Activated CD4-positive, alpha-beta T cell treated with anti-CD3 and anti-CD28 coated beads, Interleukin-2, amount 10 ng/mL, durations not matched to agents 7 days and 5 days (primary cell): ENCODE measurements at regions of chr10 and their contacts with region 1.

Region 1: DNA sequence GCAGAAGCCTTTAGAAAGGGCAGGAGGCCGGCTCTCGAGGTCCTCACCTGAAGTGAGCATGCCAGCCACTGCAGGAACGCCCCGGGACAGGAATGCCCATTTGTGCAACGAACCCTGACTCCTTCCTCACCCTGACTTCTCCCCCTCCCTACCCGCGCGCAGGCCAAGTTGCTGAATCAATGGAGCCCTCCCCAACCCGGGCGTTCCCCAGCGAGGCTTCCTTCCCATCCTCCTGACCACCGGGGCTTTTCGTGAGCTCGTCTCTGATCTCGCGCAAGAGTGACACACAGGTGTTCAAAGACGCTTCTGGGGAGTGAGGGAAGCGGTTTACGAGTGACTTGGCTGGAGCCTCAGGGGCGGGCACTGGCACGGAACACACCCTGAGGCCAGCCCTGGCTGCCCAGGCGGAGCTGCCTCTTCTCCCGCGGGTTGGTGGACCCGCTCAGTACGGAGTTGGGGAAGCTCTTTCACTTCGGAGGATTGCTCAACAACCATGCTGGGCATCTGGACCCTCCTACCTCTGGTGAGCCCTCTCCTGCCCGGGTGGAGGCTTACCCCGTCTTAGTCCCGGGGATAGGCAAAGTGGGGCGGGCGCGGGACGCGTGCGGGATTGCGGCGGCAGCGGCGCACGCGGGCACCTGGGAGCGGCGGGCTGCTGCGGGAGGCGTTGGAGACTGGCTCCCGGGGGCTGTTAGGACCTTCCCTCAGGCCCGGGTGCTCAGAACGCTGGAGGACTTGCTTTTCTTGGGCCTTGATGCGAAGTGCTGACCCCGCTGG is at the start of gene FAS:
- DNase-seq: peak; percentile 85
- H3K4me3 Mint-ChIP-seq: peak within 1 kb of the TSS; percentile 97
- H3K27ac Mint-ChIP-seq: peak within 1 kb of the TSS; percentile 97
- H3K4me1 Mint-ChIP-seq: peaks cover 69% of the 10 kb centered on the region
- H3K27me3 Mint-ChIP-seq: no peaks in the 10 kb centered on the region
- total RNA-seq, gene FAS: 62.3 to 65.1 TPM

Region 2: GRCh38 chr10:88851706-88852105 is 138.9 kb before region 1 on chr10 and contains the start of gene ANKRD22:
- CTCF ChIA-PET with region 1: no interaction called
- POLR2A ChIA-PET with region 1: no interaction called
- DNase-seq: no peak
- H3K4me3 Mint-ChIP-seq: no peak within 1 kb of the TSS
- H3K27ac Mint-ChIP-seq: no peak within 1 kb of the TSS
- H3K4me1 Mint-ChIP-seq: peaks cover 21% of the 10 kb centered on the region
- H3K27me3 Mint-ChIP-seq: peaks cover 3% of the 10 kb centered on the region
- total RNA-seq, gene ANKRD22: 0.17 to 0.48 TPM

Region 3: DNA sequence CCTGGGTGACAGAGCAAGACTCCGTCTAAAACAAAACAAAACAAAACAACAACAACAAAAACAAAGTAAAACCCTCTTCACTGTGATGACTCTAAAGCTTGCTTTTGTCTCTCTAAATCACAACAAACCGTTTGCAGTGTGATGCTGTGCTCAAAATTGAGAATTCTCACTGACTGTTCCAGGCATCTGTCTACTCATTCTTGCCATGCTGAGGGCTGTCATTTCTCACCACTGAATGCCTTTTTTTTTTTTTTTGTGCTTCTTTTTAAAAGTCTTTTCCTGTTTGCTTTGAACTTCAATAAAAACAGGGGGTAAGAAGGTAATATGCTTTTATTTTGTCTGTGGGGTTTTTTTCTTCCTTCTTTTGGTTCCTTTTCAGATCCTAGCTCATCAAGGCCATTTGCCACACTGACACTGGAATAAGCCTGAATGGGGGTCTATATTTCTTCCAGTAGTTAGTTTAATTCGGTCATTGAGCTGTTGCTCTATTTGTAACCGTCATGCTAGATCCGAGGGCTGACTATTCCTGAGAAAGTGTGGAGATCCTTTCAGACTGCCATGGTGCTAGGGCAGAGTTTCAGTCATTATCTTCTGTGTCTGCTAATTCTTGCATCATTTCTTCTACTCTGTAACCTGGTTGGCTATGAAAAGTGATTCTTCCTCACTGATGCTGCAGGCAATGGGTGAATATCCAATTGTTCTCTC is 10.6 kb after region 1 on chr10:
- CTCF ChIA-PET with region 1: interaction called, 15 read pairs
- POLR2A ChIA-PET with region 1: interaction called, 4 read pairs
- DNase-seq: peak; percentile 50
- H3K4me3 Mint-ChIP-seq: peak overlapping the region; percentile 41
- H3K27ac Mint-ChIP-seq: peak overlapping the region; percentile 82
- H3K4me1 Mint-ChIP-seq: peaks cover 77% of the 10 kb centered on the region
- H3K27me3 Mint-ChIP-seq: no peaks in the 10 kb centered on the region